HCT116 (cell line): ENCODE measurements at regions of chr10 and their contacts with region 1.

Region 1: GRCh38 chr10:104308439-104308903 is 29.8 kb downstream of the ITPRIP start:
- DNase-seq: no peak
- ATAC-seq: no peak
- H3K4me3 ChIP-seq: no peak overlapping the region
- H3K27ac ChIP-seq: no peak overlapping the region
- H3K4me1 ChIP-seq: peaks cover 0 to 5% of the 10 kb centered on the region in 2 experiments; a peak in 1 of 4 replicates
- H3K27me3 ChIP-seq: no peaks in the 10 kb centered on the region
- CTCF ChIP-seq: no peak
- POLR2A ChIP-seq: no peak
- RAD21 ChIP-seq: no peak

Region 2: GRCh38 chr10:102868911-102869257 is 1439.6 kb before region 1 on chr10:
- CTCF ChIA-PET with region 1: no interaction called
- POLR2A ChIA-PET with region 1: no interaction called
- RAD21 ChIA-PET with region 1: no interaction called
- intact Hi-C with region 1: no loop called
- DNase-seq: no peak
- ATAC-seq: no peak
- H3K4me3 ChIP-seq: no peak overlapping the region
- H3K27ac ChIP-seq: no peak overlapping the region
- H3K4me1 ChIP-seq: peaks cover 0 to 5% of the 10 kb centered on the region in 2 experiments; a peak in 2 of 4 replicates
- H3K27me3 ChIP-seq: no peaks in the 10 kb centered on the region
- CTCF ChIP-seq: no peak
- POLR2A ChIP-seq: no peak
- RAD21 ChIP-seq: no peak

Region 3: DNA sequence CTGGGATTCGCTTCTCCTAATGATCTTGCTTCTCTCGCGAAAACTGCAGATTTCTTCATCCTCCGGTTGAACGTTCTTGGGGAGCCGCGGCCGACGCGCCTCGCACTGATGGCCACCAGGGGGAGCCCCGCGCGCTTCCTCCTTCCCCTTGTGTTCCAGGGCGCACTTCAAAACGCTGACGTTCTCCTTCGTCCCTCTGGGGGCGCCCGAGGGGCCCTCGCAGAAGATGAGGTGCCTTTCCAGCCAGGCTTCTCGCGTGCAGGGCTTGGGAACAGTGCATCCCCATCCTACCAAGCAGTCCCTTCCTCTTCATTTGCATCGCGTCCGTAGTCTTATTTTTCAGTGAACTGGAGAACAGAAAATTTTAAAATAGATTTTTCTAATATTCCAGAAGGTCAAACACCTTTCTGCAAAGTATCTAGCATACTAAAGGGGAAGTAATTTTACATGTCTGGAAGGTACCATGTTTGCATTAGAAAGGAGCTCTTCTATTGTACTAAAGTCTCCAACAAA is 17.0 kb before region 1 on chr10:
- CTCF ChIA-PET with region 1: interaction called, 25 read pairs
- POLR2A ChIA-PET with region 1: interaction called, 6 read pairs
- RAD21 ChIA-PET with region 1: no interaction called
- intact Hi-C with region 1: no loop called
- DNase-seq: peak; percentile 73
- ATAC-seq: peak; percentile 97
- H3K4me3 ChIP-seq: no peak overlapping the region
- H3K27ac ChIP-seq: no peak overlapping the region
- H3K4me1 ChIP-seq: peaks cover 3 to 5% of the 10 kb centered on the region in 2 experiments; a peak in 3 of 4 replicates
- H3K27me3 ChIP-seq: no peaks in the 10 kb centered on the region
- CTCF ChIP-seq: peak; percentile 100
- POLR2A ChIP-seq: no peak
- RAD21 ChIP-seq: peak; percentile 94

Region 4: DNA sequence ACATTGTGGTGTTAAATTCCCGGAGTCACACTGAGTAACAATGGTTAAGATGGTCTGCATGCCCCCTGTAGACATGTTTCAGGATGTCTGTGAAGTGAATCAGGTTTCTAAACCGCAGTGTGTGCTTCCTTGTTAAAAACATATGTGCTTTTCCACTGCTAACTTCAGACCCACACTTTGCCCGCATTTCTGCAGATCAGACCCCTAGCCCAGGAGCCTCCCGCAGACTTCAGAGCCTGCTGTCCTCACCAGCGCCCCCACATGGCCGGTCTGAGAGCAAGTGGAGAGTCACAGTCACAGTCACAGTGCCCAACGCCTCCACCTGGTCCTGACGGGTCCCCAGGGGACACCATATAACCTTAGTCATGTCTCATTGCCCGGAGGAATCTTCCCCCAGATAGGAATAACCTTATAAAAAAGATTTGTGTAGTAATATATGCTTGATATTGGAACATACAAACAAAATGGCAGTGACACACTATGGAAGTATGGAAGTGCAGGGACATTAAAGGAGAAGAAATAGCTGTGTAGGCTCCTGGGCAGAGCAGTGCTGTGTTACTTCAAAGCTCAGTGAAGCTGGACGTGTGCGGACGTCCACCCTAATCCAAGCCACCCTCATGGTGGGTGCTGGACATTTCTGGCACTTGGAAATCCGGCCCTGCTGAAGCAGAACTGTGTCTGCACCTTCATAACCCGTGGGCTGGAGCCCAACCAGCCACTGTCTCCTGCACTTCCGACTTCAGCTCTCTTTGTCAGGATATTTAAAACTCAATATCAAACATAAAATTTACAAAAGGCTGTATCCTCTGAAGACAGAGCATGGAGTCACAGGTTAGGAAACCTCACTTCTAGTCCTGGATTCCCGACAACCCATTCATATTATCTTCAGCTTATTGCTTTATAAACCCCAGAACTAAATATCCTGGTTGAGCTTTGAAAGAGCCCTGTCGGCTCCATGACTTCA is 10.5 kb before region 1 on chr10:
- CTCF ChIA-PET with region 1: interaction called, 25 read pairs
- POLR2A ChIA-PET with region 1: interaction called, 6 read pairs
- RAD21 ChIA-PET with region 1: no interaction called
- intact Hi-C with region 1: no loop called
- DNase-seq: no peak
- ATAC-seq: peak; percentile 88
- H3K4me3 ChIP-seq: no peak overlapping the region
- H3K27ac ChIP-seq: no peak overlapping the region
- H3K4me1 ChIP-seq: no peaks in the 10 kb centered on the region
- H3K27me3 ChIP-seq: no peaks in the 10 kb centered on the region
- CTCF ChIP-seq: peak; percentile 53 to 90 (median 87); a peak in 5 of 6 replicates
- POLR2A ChIP-seq: no peak
- RAD21 ChIP-seq: 0 out of 2 replicates have a peak, but pooled peaks have one; percentile 19

Region 5: GRCh38 chr10:104337974-104338735 is 29.7 kb after region 1 on chr10 and contains the start of gene ITPRIP:
- CTCF ChIA-PET with region 1: interaction called, 12 read pairs
- POLR2A ChIA-PET with region 1: no interaction called
- RAD21 ChIA-PET with region 1: interaction called in 1 of 2 experiments, 7 read pairs
- intact Hi-C with region 1: no loop called
- DNase-seq: peak; percentile 69
- ATAC-seq: peak; percentile 73
- H3K4me3 ChIP-seq: peak within 1 kb of the TSS; percentile 76 to 95
- H3K27ac ChIP-seq: peak within 1 kb of the TSS; percentile 85
- H3K4me1 ChIP-seq: peaks cover 37 to 57% of the 10 kb centered on the region in 2 experiments
- H3K27me3 ChIP-seq: no peaks in the 10 kb centered on the region
- CTCF ChIP-seq: peak in 2 of 3 experiments; percentile 29 to 34; a peak in 3 of 6 replicates
- POLR2A ChIP-seq: peak; percentile 87
- RAD21 ChIP-seq: no peak
- total RNA-seq, gene ITPRIP: 12.0 TPM

Region 6: DNA sequence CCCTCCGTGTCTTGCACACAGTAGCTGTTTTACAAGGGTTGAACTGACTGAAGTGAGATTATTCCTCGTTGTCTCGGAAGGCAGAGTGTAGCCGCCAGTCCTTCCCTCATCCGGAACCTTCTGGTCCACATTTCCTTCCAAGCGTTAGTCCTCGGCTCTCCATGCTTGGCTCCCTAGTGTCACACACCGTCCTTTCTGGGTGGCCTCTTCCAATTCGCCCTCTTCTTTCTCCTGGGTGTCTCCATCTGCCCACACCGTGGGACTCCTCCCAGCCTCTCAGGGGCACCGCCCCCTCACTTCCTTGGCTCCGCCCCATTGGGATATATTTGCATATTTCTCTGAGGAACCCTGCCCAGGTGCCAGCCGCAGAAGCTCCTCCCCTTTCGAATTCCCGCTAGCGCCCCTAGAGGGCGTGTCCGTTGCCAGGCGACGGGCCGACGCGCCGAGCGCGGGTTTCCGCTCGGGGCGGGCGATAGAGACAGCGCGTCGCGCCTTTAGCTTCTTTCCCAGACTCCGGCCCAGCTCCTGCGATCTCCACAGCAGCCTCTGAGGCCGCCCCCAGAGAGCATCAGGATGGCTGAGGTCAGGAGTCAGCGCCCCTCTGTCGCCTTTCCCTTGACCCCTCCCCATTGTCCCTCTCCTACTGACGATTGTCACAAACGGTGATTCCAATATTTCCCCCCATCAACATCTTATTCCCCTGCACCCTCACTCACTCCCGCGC is 45.0 kb after region 1 on chr10 and contains the start of gene CFAP58:
- CTCF ChIA-PET with region 1: interaction called, 42 read pairs
- POLR2A ChIA-PET with region 1: interaction called, 3 read pairs
- RAD21 ChIA-PET with region 1: interaction called, 6 read pairs
- intact Hi-C with region 1: loop called (anchors 1 kb)
- DNase-seq: peak; percentile 89
- ATAC-seq: peak; percentile 97
- H3K4me3 ChIP-seq: peak within 1 kb of the TSS; percentile 20 to 38
- H3K27ac ChIP-seq: no peak within 1 kb of the TSS
- H3K4me1 ChIP-seq: peaks cover 7 to 33% of the 10 kb centered on the region in 2 experiments; a peak in 3 of 4 replicates
- H3K27me3 ChIP-seq: no peaks in the 10 kb centered on the region; the same call in 1 of the 2 replicates
- CTCF ChIP-seq: peak; percentile 41 to 83 (median 75); a peak in 4 of 6 replicates
- POLR2A ChIP-seq: no peak
- RAD21 ChIP-seq: peak; percentile 9; the same call in 1 of the 2 replicates
- total RNA-seq, gene CFAP58: 0.91 TPM

Region 7: DNA sequence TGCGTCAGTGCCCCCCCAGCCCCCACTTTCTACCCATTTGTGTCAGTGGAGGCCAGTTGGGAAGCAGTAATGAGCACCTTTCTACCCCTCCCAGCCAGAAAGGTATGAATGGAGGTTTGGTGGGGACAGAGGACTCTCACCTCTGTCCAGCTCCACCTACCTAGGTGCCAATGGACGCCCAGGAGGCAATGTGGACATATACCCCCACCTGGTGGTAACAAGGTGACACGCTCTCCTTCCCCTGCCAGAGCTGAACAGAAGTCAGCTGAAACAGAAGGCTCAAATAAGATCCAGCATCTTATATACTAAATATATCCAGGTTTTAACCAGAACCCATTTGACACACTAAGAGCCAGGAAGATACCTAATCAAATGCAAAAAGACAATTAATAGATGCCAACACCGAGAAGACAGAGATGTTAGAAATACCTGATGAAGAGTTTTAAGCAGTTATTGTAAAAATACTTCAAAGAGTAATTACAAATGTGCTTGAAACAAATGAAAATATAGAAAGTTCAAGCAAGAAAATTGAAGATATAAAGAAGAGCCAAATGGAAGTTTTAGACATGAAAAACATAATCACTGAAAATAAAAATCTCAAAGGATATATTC is 314.2 kb after region 1 on chr10:
- CTCF ChIA-PET with region 1: interaction called, 16 read pairs
- POLR2A ChIA-PET with region 1: no interaction called
- RAD21 ChIA-PET with region 1: no interaction called
- intact Hi-C with region 1: no loop called
- DNase-seq: peak; percentile 55
- ATAC-seq: peak; percentile 99
- H3K4me3 ChIP-seq: no peak overlapping the region
- H3K27ac ChIP-seq: no peak overlapping the region
- H3K4me1 ChIP-seq: no peaks in the 10 kb centered on the region
- H3K27me3 ChIP-seq: peaks cover 50% of the 10 kb centered on the region
- CTCF ChIP-seq: peak; percentile 87 to 97 (median 93)
- POLR2A ChIP-seq: no peak
- RAD21 ChIP-seq: peak; percentile 93